ENCODE measurements at regions of chr3 and their contacts with region 1.

Region 1: DNA sequence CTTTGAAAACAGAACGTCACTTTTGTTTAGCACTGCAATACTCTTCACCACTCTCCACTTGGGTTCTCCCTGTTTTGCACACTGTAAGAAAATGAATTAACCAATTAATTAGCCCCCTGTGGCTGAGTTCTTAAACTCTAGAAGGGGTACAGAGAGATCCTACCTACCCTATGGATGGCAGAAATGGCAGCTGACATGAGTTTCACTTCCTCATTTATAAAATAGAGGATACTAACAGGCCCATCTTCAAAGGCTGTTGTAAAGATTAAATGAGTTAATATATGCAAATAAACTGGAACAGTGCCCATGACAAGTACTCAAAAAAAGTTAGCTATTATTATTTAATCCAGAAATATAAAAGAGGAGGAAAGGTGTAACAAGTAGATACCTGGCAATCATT is 36.9 kb downstream of the SUCLG2 start:
- DNase-seq: no peak
- ATAC-seq: peak; percentile 34
- H3K4me3 Mint-ChIP-seq: no peak overlapping the region
- H3K27ac Mint-ChIP-seq: no peak overlapping the region
- H3K4me1 Mint-ChIP-seq: peaks cover 12% of the 10 kb centered on the region
- H3K27me3 Mint-ChIP-seq: no peaks in the 10 kb centered on the region
- CTCF ChIP-seq: no peak

Region 2: DNA sequence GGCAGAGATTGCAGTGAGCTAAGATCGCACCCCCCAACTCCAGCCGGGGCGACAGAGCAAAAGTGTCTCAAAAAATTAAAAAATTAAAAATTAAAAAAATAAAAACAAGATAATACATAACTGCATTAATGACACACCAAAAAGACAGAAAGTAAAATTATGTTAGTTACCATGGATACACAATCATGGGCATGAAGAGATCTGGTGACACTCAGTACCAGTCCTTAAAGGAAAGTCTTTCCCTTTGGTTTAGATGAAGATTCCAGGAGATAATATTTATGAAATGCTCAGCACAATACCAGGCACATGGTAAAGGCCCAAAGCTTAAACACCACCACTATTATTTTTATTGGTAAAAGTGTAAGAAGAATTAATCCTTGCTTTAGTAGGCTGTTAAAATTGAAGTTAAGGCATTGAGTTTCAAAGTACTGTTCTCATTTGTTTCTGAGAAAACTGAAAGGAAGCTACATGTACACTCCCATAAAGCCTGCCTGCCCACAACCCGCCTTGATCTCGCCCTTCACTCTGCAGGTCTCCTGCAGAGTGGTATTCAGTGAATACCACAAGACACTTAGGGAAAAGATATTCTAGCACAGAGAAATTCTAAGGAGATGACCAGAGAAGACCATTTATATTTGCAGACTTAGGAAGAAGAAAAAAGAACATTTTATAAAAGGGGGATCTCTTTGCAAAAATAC is 15.5 kb before region 1 on chr3:
- CTCF ChIA-PET with region 1: no interaction called
- POLR2A ChIA-PET with region 1: interaction called, 3 read pairs
- intact Hi-C with region 1: loop called (anchors 2 kb)
- DNase-seq: no peak
- ATAC-seq: no peak
- H3K4me3 Mint-ChIP-seq: no peak overlapping the region
- H3K27ac Mint-ChIP-seq: no peak overlapping the region
- H3K4me1 Mint-ChIP-seq: peaks cover 29% of the 10 kb centered on the region
- H3K27me3 Mint-ChIP-seq: no peaks in the 10 kb centered on the region
- CTCF ChIP-seq: no peak

Measured in activated B cell treated with CpG ODN at 0.5 μM for 24 hours (primary cell).